ENCODE measurements at regions of chr21 and their contacts with region 1.

Region 1: GRCh38 chr21:45109831-45110492 is 35.6 kb downstream of the ADARB1 start:
- DNase-seq: peak; percentile 55
- ATAC-seq: peak; percentile 84
- H3K4me3 Mint-ChIP-seq: peak overlapping the region; percentile 82
- H3K27ac Mint-ChIP-seq: peak overlapping the region; percentile 90
- H3K4me1 Mint-ChIP-seq: peaks cover 99% of the 10 kb centered on the region
- H3K27me3 Mint-ChIP-seq: no peaks in the 10 kb centered on the region
- CTCF ChIP-seq: no peak

Region 2: GRCh38 chr21:44568754-44569556 is 541.0 kb before region 1 on chr21:
- CTCF ChIA-PET with region 1: no interaction called
- POLR2A ChIA-PET with region 1: no interaction called
- intact Hi-C with region 1: loop called (anchors 5 kb)
- DNase-seq: no peak
- ATAC-seq: no peak
- H3K4me3 Mint-ChIP-seq: no peak overlapping the region
- H3K27ac Mint-ChIP-seq: no peak overlapping the region
- H3K4me1 Mint-ChIP-seq: peaks cover 30% of the 10 kb centered on the region
- H3K27me3 Mint-ChIP-seq: peaks cover 6% of the 10 kb centered on the region
- CTCF ChIP-seq: no peak

Region 3: GRCh38 chr21:44742418-44743153 is 367.4 kb before region 1 on chr21:
- CTCF ChIA-PET with region 1: no interaction called
- POLR2A ChIA-PET with region 1: no interaction called
- intact Hi-C with region 1: no loop called
- DNase-seq: no peak
- ATAC-seq: no peak
- H3K4me3 Mint-ChIP-seq: no peak overlapping the region
- H3K27ac Mint-ChIP-seq: no peak overlapping the region
- H3K4me1 Mint-ChIP-seq: no peaks in the 10 kb centered on the region
- H3K27me3 Mint-ChIP-seq: no peaks in the 10 kb centered on the region
- CTCF ChIP-seq: no peak

Region 4: DNA sequence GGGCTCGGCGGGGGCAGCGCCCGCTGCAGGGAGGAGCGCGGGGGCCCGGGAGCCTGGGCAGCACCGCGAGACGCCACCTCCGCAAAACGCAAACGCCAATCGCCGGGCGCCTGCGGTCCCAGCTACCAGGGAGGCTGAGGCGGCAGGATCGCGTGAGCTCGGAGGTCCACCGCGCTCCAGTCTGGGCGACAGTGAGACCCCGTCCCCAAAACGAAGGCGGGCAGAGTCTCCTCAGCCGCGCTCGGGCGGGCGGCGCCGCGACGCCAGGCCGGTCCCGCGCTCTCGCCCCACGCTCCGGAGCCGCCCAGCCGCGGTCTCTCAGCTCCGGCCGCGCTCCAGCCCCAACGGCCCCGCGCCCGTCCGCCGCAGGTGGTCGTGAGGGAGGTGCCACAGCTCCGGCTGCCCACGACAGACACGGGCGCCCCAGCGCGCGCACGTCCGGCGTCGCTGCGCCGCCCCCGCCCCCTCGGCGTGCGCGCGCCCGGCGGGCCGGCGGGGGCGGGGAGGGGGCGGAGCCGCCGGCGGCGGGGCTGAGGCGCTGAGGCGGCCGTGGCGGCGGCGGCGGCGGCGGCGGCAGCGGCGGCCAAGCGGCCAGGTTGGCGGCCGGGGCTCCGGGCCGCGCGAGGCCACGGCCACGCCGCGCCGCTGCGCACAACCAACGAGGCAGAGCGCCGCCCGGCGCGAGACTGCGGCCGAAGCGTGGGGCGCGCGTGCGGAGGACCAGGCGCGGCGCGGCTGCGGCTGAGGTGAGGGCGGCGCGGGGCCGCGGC is 35.7 kb before region 1 on chr21 and contains the start of gene ADARB1:
- CTCF ChIA-PET with region 1: no interaction called
- POLR2A ChIA-PET with region 1: interaction called, 6 read pairs
- intact Hi-C with region 1: loop called (anchors 1 kb)
- DNase-seq: peak; percentile 74
- ATAC-seq: peak; percentile 79
- H3K4me3 Mint-ChIP-seq: peak within 1 kb of the TSS; percentile 89
- H3K27ac Mint-ChIP-seq: peak within 1 kb of the TSS; percentile 82
- H3K4me1 Mint-ChIP-seq: peaks cover 41% of the 10 kb centered on the region
- H3K27me3 Mint-ChIP-seq: no peaks in the 10 kb centered on the region
- CTCF ChIP-seq: no peak
- total RNA-seq, gene ADARB1: 21.6 and 22.6 TPM in 2 replicates

Region 5: GRCh38 chr21:45098867-45099266 is 11.1 kb before region 1 on chr21:
- CTCF ChIA-PET with region 1: interaction called, 5 read pairs
- POLR2A ChIA-PET with region 1: interaction called, 3 read pairs
- intact Hi-C with region 1: loop called (anchors 2 kb)
- DNase-seq: no peak
- ATAC-seq: peak; percentile 46
- H3K4me3 Mint-ChIP-seq: no peak overlapping the region
- H3K27ac Mint-ChIP-seq: peak overlapping the region; percentile 60
- H3K4me1 Mint-ChIP-seq: peaks cover 85% of the 10 kb centered on the region
- H3K27me3 Mint-ChIP-seq: no peaks in the 10 kb centered on the region
- CTCF ChIP-seq: no peak

Measured in activated B cell treated with CpG ODN at 0.5 μM for 24 hours (primary cell).